H1 (cell line): ENCODE measurements at regions of chr4 and their contacts with region 1.

Region 1: DNA sequence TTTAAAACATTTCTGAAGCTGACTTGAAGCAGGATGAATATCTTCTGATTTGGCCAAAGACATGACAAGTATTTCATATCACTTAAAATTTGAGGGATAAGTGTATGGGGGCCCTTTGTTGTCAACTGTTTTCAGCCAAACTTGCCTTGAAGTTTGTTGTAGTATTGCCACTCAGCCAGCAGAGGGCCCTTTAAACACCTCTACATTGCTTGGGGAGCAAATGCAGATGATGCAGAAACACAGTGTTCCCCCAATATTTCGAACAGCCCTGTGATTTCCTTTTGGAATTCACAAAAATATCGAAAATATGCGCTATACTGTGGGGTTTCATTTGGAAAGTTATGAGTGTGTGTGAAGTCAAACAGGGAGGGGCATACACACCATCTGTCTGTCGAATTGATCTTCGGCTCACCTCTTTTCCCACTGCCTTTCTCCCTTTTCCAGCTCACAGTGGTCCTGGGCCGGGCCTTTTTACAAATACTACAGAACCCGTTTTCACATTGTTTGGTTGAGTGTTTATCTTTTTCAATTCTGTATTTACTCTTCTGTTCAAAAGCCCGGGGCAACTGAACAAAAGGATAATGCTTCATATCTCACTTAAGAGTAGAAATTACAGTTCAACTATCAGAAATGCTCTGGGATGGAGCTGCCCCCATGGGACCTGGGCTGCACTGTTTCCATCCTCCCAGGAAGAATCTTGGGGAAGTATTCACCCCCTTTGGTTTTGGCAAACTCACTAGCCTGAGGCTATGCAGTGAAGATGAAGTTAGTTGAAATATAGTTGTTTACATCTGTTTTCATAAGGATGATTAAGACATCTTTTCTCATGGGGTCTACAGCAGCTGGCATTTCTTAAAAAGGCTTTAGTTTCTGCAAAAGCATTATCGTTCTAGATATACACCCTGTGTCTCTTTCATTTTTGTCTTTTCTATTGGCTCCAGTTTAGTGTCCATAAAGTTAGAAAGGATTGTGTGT is 137.6 kb downstream of the EGF start:
- DNase-seq: peak in 1 of 2 experiments; percentile 63
- H3K4me3 ChIP-seq: no peak overlapping the region
- H3K27ac ChIP-seq: no peak overlapping the region
- H3K4me1 ChIP-seq: no peaks in the 10 kb centered on the region
- H3K27me3 ChIP-seq: no peaks in the 10 kb centered on the region
- CTCF ChIP-seq: peak in 2 of 3 experiments; percentile 58 to 78; a peak in 3 of 4 replicates
- EP300 ChIP-seq: no peak
- POLR2A ChIP-seq: no peak
- RAD21 ChIP-seq: peak; percentile 70 to 73

Region 2: DNA sequence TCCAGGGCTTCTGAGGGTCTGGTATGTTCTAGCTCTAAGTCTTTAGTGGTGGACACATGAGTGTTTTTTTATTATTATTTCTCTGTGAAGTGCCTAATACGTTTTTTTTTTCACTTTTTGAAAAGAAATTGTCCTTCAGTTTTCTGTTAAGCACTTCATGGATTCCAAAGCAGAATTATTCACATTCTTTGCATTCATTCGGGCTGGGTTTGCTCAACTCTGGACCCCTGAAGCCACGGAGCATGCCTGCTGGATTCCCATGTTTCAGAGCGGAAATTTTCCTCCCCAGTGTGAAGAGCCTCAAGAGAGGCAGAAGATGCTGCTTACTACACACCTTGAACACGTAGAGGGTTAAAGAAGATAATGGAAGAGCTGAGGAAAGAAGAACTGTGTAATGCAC is 30.1 kb before region 1 on chr4:
- CTCF ChIA-PET with region 1: interaction called, 32 read pairs
- POLR2A ChIA-PET with region 1: no interaction called
- DNase-seq: no peak
- H3K4me3 ChIP-seq: no peak overlapping the region
- H3K27ac ChIP-seq: no peak overlapping the region
- H3K4me1 ChIP-seq: peaks cover 0 to 3% (median 0%) of the 10 kb centered on the region in 4 experiments; a peak in 2 of 7 replicates
- H3K27me3 ChIP-seq: no peaks in the 10 kb centered on the region
- CTCF ChIP-seq: no peak
- EP300 ChIP-seq: no peak
- POLR2A ChIP-seq: no peak
- RAD21 ChIP-seq: no peak

Region 3: GRCh38 chr4:110071466-110071865 is 21.2 kb after region 1 on chr4:
- CTCF ChIA-PET with region 1: interaction called, 19 read pairs
- POLR2A ChIA-PET with region 1: interaction called, 3 read pairs
- DNase-seq: no peak
- H3K4me3 ChIP-seq: no peak overlapping the region; a peak in 1 of 8 replicates
- H3K27ac ChIP-seq: no peak overlapping the region
- H3K4me1 ChIP-seq: peaks cover 0 to 7% (median 1%) of the 10 kb centered on the region in 4 experiments; a peak in 1 of 7 replicates
- H3K27me3 ChIP-seq: no peaks in the 10 kb centered on the region
- CTCF ChIP-seq: no peak
- EP300 ChIP-seq: no peak
- POLR2A ChIP-seq: no peak
- RAD21 ChIP-seq: no peak

Region 4: DNA sequence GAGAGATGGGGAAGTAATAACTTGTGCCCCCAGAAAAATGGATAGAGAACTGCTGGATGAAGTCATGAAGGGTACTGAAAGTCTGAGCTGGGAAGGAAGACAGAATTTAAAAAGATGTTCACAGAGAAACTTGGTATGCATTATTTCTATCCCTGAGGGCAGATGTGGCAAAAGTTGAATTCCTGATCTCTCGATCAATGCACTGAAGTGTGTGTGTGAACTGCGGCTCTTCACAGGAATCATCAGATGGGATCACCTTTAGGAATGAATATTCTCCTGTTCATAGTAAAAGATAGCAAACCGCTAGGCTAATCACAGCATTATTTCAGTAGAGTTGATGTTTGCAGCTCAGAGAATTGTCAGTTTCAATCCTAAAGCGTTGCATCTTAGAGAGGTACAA is 61.8 kb after region 1 on chr4:
- CTCF ChIA-PET with region 1: interaction called, 12 read pairs
- POLR2A ChIA-PET with region 1: no interaction called
- DNase-seq: no peak
- H3K4me3 ChIP-seq: no peak overlapping the region
- H3K27ac ChIP-seq: no peak overlapping the region
- H3K4me1 ChIP-seq: peaks cover 0 to 13% (median 7%) of the 10 kb centered on the region in 4 experiments; a peak in 5 of 7 replicates
- H3K27me3 ChIP-seq: no peaks in the 10 kb centered on the region
- CTCF ChIP-seq: no peak
- EP300 ChIP-seq: no peak
- POLR2A ChIP-seq: no peak
- RAD21 ChIP-seq: no peak

Region 5: DNA sequence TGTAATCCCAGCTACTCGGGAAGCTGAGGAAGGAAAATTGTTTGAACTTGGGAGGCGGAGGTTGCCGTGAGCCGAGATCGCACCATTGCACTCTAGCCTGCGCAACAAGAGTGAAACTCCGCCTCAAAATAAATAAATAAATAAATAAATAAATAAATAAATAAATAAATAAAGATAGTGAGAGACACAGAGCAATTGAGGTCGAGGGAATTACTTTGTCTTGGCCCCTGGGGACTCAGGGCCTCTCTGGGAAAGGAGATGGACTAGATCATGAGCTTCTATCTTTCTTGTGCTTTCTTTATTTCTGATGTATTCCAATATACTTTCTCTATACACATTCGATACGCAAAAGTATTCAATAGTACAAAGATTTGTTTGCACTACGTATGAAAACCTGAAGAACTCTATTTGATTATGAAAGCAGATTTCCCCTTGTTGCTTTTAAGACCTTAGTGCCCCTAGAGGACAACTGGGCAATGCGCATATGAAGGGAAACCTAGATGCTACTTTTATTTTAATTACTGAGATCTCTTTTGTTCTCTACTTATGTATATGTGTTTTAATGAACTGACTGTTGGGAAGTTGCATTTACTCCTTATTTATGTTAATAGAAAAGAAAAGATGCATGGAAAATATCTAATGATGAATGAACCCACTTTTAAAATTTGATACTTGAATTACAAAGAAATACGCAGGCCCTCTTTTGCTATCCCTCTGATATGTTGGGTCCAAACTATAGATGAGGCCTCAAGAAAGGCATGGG is 160.9 kb after region 1 on chr4:
- CTCF ChIA-PET with region 1: interaction called, 10 read pairs
- POLR2A ChIA-PET with region 1: no interaction called
- DNase-seq: no peak
- H3K4me3 ChIP-seq: no peak overlapping the region
- H3K27ac ChIP-seq: no peak overlapping the region
- H3K4me1 ChIP-seq: peaks cover 0 to 3% (median 0%) of the 10 kb centered on the region in 4 experiments; a peak in 1 of 7 replicates
- H3K27me3 ChIP-seq: no peaks in the 10 kb centered on the region
- CTCF ChIP-seq: peak in 2 of 3 experiments; percentile 42 to 60; a peak in 2 of 4 replicates
- EP300 ChIP-seq: no peak
- POLR2A ChIP-seq: no peak
- RAD21 ChIP-seq: peak; percentile 48 to 52

Region 6: DNA sequence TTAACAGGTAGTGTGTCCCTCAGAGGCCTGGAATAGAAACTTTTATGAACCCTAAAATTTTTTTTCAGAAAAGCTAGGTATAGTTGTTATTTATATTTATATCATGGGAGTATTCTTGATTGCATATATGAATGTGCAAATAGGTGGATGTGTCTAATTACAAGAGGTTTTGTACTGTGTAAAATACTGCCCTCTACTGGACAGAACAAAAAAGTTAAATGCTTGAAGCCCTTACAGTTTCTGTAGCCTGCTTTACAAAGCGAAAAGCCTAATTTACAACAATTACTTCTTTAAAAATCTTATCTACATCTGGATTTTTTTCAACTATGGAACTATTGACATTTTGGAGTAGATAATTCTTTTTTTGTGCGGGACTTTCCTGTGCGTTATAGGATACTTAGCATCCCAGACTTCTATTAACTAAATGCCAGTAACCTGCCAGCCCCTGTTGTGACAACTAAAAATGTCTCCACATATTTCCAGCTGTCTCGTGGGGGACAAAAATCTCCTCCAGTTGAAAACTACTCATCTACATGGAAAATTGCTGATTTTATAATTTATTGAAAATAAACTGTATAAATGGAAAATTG is 460.8 kb after region 1 on chr4:
- CTCF ChIA-PET with region 1: interaction called, 12 read pairs
- POLR2A ChIA-PET with region 1: no interaction called
- DNase-seq: no peak
- H3K4me3 ChIP-seq: no peak overlapping the region
- H3K27ac ChIP-seq: no peak overlapping the region
- H3K4me1 ChIP-seq: no peaks in the 10 kb centered on the region
- H3K27me3 ChIP-seq: no peaks in the 10 kb centered on the region
- CTCF ChIP-seq: peak in 2 of 3 experiments; percentile 47 to 56; a peak in 2 of 4 replicates
- EP300 ChIP-seq: no peak
- POLR2A ChIP-seq: no peak
- RAD21 ChIP-seq: peak; percentile 64 to 68